ENCODE measurements at regions of chr2 and their contacts with region 1.

Region 1: GRCh38 chr2:65944213-65944612 is 490.7 kb upstream of the MEIS1 start:
- DNase-seq: no peak
- H3K4me3 ChIP-seq: no peak overlapping the region
- H3K27ac ChIP-seq: no peak overlapping the region
- H3K4me1 ChIP-seq: no peaks in the 10 kb centered on the region
- H3K27me3 ChIP-seq: no peaks in the 10 kb centered on the region
- CTCF ChIP-seq: no peak
- EP300 ChIP-seq: no peak
- POLR2A ChIP-seq: no peak

Region 2: GRCh38 chr2:65997961-65998360 is 53.7 kb after region 1 on chr2:
- in situ Hi-C with region 1: no loop called
- intact Hi-C with region 1: loop called (anchors 2 kb)
- DNase-seq: no peak
- H3K4me3 ChIP-seq: no peak overlapping the region
- H3K27ac ChIP-seq: no peak overlapping the region
- H3K4me1 ChIP-seq: no peaks in the 10 kb centered on the region
- H3K27me3 ChIP-seq: no peaks in the 10 kb centered on the region
- CTCF ChIP-seq: no peak
- EP300 ChIP-seq: no peak
- POLR2A ChIP-seq: no peak